ENCODE measurements at regions of chr17 and their contacts with region 1.

Region 1: DNA sequence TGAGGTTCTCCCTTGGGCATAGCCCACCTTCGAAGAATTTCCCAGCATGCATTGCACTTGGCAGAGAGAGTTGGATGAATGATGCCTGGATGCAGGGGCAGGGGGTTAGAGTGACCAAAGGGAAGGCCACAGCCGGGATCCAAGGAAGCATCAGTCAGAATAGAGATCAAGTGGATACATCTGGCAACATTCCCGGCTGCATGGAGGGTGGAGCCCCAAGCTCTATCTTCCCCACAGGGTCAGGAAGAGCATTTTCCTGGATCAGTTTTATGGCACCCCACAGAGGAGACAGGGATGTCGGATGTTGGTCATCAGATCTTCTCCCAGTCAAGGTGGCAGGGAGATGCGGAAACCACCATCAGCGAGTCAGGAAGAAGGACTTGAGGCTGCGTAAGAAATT is 13.0 kb downstream of the PIRT start:
- H3K4me3 ChIP-seq: no peak overlapping the region
- H3K27ac ChIP-seq: no peak overlapping the region
- H3K4me1 ChIP-seq: no peaks in the 10 kb centered on the region
- CTCF ChIP-seq: no peak

Region 2: DNA sequence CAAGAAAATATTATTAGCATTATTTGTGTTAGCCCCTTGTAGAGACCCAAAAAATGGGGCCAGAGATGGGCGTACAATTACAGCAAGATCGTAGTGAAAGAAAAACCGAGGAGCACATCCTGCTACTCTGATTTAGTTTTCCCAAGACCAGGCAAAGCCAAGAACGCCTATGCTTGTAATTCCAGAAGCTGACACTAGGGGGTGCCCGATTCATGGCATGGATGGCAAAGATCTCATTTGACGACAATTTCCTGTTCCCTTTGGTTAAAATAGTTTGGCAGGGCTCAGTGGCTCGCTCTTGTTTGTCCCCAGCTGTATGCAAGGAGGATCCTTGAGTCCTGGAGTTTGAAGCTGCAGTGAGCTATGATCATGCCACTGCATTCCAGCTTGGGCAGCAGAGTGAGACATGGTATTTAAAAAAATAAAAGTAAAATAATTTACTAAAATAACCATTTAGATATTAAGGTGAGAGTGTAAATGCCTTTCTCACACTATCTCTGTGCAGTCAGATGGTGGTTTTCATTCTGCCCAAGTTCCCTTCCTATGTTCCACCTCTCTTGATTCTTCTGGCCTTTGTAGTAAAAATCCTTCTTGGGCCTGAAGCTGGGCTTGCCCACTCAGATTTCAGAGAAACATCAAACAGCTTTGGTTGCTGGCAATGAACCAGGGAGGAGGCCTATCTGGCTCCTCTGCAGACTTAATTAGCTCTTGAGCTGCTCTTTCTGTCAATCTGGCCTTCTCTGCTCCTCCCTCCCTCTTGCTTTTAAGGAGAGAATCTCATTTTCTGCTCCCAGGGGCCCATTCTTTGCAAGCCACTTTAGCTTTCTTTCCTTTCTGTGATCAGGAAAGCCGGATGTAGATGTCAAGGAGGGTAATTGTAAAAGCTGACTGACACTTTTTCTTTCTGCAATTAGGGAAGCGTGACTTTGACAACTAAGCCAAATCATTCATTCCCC is 52.2 kb before region 1 on chr17:
- CTCF ChIA-PET with region 1: interaction called, 11 read pairs
- POLR2A ChIA-PET with region 1: no interaction called
- H3K4me3 ChIP-seq: no peak overlapping the region
- H3K27ac ChIP-seq: no peak overlapping the region
- H3K4me1 ChIP-seq: no peaks in the 10 kb centered on the region
- CTCF ChIP-seq: peak; percentile 46; the same call in 1 of the 2 replicates

Measured in HEK293 (cell line).